ENCODE measurements at regions of chr11 and their contacts with region 1.

Region 1: GRCh38 chr11:30504468-30504867 is 81.7 kb downstream of the MPPED2 start:
- DNase-seq: no peak
- ATAC-seq: no peak
- H3K4me3 ChIP-seq: no peak overlapping the region
- H3K27ac ChIP-seq: no peak overlapping the region
- H3K4me1 ChIP-seq: peaks cover 8 to 37% of the 10 kb centered on the region in 2 donors
- H3K27me3 ChIP-seq: no peaks in the 10 kb centered on the region
- CTCF ChIP-seq: no peak
- POLR2A ChIP-seq: no peak

Region 2: GRCh38 chr11:30225642-30226041 is 278.8 kb before region 1 on chr11:
- in situ Hi-C with region 1: no loop called
- intact Hi-C with region 1: no loop called
- DNase-seq: no peak
- ATAC-seq: no peak
- H3K4me3 ChIP-seq: no peak overlapping the region
- H3K27ac ChIP-seq: no peak overlapping the region
- H3K4me1 ChIP-seq: no peaks in the 10 kb centered on the region
- H3K27me3 ChIP-seq: no peaks in the 10 kb centered on the region
- CTCF ChIP-seq: no peak
- POLR2A ChIP-seq: no peak

Region 3: DNA sequence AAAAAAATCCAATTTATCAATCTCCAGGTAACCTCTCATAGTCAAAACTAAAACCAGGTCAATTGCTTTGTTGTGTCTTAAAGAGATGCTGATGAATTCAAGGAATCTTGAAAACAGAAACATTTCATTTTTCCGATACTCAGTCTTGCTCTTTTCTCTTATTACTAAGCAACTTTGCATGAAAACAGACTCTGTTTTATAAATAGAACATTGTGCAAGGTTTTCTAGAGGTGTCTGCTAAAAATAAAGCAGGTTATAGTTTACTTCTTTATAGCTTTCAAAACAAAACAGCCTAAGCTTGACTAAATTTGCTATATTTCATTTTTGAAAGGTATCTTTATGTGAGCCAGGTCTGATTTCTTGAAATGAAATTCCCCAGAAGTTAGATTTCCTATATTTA is 72.3 kb before region 1 on chr11:
- in situ Hi-C with region 1: no loop called
- intact Hi-C with region 1: loop called (anchors 5 kb)
- DNase-seq: no peak
- ATAC-seq: peak; percentile 75 to 83
- H3K4me3 ChIP-seq: peak overlapping the region in 3 of 4 donors; percentile 5 to 18 (median 16)
- H3K27ac ChIP-seq: peak overlapping the region in 3 of 4 donors; percentile 29 to 69 (median 47)
- H3K4me1 ChIP-seq: peaks cover 21 to 27% of the 10 kb centered on the region in 2 donors
- H3K27me3 ChIP-seq: no peaks in the 10 kb centered on the region
- CTCF ChIP-seq: no peak
- POLR2A ChIP-seq: no peak

Region 4: DNA sequence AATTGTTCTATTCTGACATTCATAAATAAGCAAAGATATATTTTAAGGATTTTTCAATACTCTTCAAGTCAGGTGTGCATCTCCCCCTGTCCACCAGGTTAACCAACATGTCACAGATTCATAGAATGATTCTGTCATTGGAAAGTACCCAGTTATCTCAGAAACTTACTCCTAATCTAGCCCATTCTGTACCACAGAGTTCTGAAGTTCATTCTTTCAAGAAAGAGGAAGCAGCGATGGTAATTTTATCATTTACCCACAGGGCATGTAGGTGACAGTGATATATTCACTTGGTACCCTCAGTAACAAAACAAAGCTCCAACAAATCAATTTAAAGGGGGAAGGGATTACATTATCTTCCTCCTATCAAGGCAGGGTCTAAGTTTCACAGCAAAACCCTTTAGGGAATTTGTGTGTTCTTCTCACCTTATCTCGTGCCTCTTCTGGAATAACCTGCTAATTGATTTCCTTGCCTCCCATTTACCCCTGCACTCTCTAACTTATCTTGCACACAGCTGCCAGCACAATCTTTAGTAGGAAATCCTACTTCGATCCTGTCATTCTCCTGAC is 100.7 kb after region 1 on chr11:
- in situ Hi-C with region 1: no loop called
- intact Hi-C with region 1: no loop called
- DNase-seq: no peak
- ATAC-seq: no peak
- H3K4me3 ChIP-seq: no peak overlapping the region
- H3K27ac ChIP-seq: no peak overlapping the region
- H3K4me1 ChIP-seq: no peaks in the 10 kb centered on the region
- H3K27me3 ChIP-seq: no peaks in the 10 kb centered on the region
- CTCF ChIP-seq: no peak
- POLR2A ChIP-seq: no peak

Measured in gastrocnemius medialis (tissue), 4 donors.